ENCODE measurements at regions of chr3 and their contacts with region 1.

Region 1: GRCh38 chr3:153768561-153769469 is 352.4 kb upstream of the ARHGEF26 start:
- DNase-seq: peak; percentile 57
- H3K4me3 ChIP-seq: no peak overlapping the region
- H3K27ac ChIP-seq: no peak overlapping the region
- H3K4me1 ChIP-seq: no peaks in the 10 kb centered on the region
- H3K27me3 ChIP-seq: no peaks in the 10 kb centered on the region
- CTCF ChIP-seq: peak; percentile 78
- POLR2A ChIP-seq: no peak

Region 2: DNA sequence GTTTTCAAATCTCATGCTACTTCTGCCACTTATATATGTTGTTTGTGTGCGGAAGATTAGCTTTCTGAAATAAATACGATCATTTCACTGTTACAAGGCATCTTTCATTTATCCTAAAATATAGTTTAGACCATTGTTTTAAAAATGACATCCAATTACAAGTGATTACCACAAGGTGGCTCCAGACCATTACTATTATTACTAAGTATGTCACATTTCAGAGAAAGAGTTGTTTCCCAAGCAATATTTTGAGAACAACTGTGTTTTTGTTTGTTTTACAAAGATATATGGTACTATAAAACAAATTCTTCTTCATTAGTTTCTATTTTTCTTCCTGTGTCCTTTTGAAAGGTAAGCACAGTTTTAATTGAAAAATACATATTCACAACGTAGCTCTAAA is 742.8 kb before region 1 on chr3:
- CTCF ChIA-PET with region 1: interaction called, 12 read pairs
- POLR2A ChIA-PET with region 1: no interaction called
- dilution Hi-C with region 1: no loop called
- intact Hi-C with region 1: loop called (anchors 1 kb)
- DNase-seq: peak; percentile 53
- H3K4me3 ChIP-seq: no peak overlapping the region
- H3K27ac ChIP-seq: no peak overlapping the region
- H3K4me1 ChIP-seq: peaks cover 8% of the 10 kb centered on the region
- H3K27me3 ChIP-seq: peaks cover 0 to 6% of the 10 kb centered on the region in 2 experiments
- CTCF ChIP-seq: peak; percentile 28 to 35
- POLR2A ChIP-seq: no peak

Region 3: GRCh38 chr3:153291056-153291685 is 477.6 kb before region 1 on chr3:
- CTCF ChIA-PET with region 1: interaction called, 6 read pairs
- POLR2A ChIA-PET with region 1: no interaction called
- dilution Hi-C with region 1: no loop called
- intact Hi-C with region 1: loop called (anchors 1 kb)
- DNase-seq: peak; percentile 27
- H3K4me3 ChIP-seq: no peak overlapping the region
- H3K27ac ChIP-seq: no peak overlapping the region
- H3K4me1 ChIP-seq: no peaks in the 10 kb centered on the region
- H3K27me3 ChIP-seq: no peaks in the 10 kb centered on the region
- CTCF ChIP-seq: peak; percentile 17 to 25
- POLR2A ChIP-seq: no peak

Region 4: GRCh38 chr3:153513236-153513635 is 255.6 kb before region 1 on chr3:
- CTCF ChIA-PET with region 1: interaction called, 6 read pairs
- POLR2A ChIA-PET with region 1: no interaction called
- dilution Hi-C with region 1: no loop called
- intact Hi-C with region 1: loop called (anchors 5 kb)
- DNase-seq: peak; percentile 34
- H3K4me3 ChIP-seq: no peak overlapping the region
- H3K27ac ChIP-seq: no peak overlapping the region
- H3K4me1 ChIP-seq: no peaks in the 10 kb centered on the region
- H3K27me3 ChIP-seq: no peaks in the 10 kb centered on the region
- CTCF ChIP-seq: peak; percentile 15 to 36
- POLR2A ChIP-seq: no peak

Region 5: GRCh38 chr3:153621953-153622352 is 146.9 kb before region 1 on chr3:
- CTCF ChIA-PET with region 1: interaction called, 4 read pairs
- POLR2A ChIA-PET with region 1: no interaction called
- dilution Hi-C with region 1: no loop called
- intact Hi-C with region 1: loop called (anchors 10 kb)
- DNase-seq: peak; percentile 32
- H3K4me3 ChIP-seq: no peak overlapping the region
- H3K27ac ChIP-seq: no peak overlapping the region
- H3K4me1 ChIP-seq: peaks cover 35% of the 10 kb centered on the region
- H3K27me3 ChIP-seq: no peaks in the 10 kb centered on the region
- CTCF ChIP-seq: no peak
- POLR2A ChIP-seq: no peak

Region 6: DNA sequence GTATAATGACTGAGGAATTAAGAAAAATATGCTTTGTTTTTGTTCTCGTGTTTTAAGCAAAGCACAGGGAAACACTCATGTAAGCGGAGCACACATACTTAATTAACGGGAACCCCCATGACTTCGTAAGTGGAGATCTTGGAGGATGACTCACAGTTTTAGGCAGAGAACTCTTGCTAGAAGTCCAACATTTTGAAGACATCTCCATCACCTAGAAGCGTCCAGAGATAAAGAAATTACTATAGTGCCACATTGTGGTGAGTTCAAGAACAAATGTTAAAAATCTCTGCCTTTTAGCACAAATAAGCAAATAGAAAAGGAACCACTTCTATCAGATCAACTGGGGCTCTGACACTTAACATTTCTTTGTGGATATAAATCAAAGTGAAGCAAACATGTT is 158.3 kb after region 1 on chr3:
- CTCF ChIA-PET with region 1: no interaction called
- POLR2A ChIA-PET with region 1: no interaction called
- dilution Hi-C with region 1: no loop called
- intact Hi-C with region 1: loop called (anchors 5 kb)
- DNase-seq: peak; percentile 50
- H3K4me3 ChIP-seq: no peak overlapping the region
- H3K27ac ChIP-seq: no peak overlapping the region
- H3K4me1 ChIP-seq: no peaks in the 10 kb centered on the region
- H3K27me3 ChIP-seq: no peaks in the 10 kb centered on the region
- CTCF ChIP-seq: no peak
- POLR2A ChIP-seq: no peak

Measured in endothelial cell of umbilical vein (primary cell).